GM10248 (cell line): ENCODE measurements at regions of chr17 and their contacts with region 1.

Region 1: DNA sequence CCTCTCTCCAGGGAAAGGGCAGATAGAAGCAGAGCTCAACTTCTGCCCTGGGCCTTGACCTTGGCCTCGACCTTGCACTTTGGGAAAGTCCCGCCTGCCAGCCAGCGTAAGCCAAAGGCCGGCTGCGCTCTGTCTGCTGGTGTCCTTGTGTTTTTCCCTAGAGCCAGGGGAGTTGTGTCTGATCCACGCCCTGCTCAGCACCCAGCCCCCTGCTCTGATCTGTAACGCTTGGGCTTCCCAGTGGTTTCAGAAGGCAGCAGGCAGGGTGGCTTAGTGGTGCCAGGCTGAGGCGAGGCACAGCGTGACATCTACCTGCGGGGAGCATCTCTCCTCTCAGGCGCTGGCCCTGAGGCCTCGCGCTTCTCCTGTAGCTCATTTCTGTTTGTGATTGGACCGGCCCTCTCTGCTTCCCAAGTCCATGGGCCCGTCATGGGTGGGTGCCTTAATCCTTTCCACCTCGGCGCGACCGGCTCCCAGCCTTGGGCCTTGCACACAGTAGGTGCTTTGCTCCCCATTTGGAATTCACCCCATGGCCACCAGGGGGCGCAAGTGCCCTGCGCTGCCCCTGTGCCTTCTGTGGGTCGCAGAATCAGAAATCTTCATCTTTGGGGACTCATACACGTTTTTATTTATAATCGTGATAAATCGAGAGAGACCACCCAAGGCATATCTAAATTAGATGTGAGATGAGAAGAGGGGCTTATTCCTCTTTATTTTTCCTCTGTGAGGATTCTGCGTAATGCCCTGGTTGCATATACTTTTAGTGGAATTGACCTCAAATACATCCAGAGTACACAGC is 24.2 kb downstream of the SGSH start:
- DNase-seq: peak; percentile 64
- CTCF ChIP-seq: peak; percentile 85

Region 2: DNA sequence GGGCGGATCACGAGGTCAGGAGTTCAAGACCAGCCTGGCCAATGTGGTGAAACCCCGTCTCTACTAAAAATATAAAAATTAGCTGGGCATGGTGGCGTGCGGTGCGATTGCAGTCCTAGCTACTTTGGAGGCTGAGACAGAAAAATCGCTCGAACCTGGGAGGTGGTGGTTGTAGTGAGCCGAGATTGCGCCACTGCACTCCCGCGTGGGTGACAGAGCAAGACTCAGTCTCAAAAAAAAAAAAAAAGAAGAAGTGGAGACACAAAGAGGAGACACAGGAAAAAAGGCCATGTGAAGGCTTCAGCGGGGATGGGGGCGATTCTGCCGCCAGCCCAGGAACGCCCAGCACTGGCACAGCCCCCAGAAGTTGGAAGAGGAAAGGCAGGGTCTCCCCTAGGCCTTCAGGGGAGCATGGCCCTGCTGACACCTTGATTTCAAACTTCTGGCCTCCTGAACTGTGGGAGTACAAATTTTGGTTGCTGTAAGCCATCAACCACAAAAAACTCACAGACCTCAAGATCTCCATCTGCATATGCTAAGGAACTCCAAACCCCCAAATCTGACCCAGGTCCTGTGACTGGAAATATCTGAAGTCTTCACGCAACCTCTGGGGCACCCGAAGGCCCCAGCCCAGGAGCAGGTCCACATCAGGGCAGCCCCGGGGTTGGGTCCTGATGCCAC is 17.2 kb after region 1 on chr17:
- CTCF ChIA-PET with region 1: interaction called, 18 read pairs
- POLR2A ChIA-PET with region 1: no interaction called
- DNase-seq: no peak
- CTCF ChIP-seq: no peak

Region 3: DNA sequence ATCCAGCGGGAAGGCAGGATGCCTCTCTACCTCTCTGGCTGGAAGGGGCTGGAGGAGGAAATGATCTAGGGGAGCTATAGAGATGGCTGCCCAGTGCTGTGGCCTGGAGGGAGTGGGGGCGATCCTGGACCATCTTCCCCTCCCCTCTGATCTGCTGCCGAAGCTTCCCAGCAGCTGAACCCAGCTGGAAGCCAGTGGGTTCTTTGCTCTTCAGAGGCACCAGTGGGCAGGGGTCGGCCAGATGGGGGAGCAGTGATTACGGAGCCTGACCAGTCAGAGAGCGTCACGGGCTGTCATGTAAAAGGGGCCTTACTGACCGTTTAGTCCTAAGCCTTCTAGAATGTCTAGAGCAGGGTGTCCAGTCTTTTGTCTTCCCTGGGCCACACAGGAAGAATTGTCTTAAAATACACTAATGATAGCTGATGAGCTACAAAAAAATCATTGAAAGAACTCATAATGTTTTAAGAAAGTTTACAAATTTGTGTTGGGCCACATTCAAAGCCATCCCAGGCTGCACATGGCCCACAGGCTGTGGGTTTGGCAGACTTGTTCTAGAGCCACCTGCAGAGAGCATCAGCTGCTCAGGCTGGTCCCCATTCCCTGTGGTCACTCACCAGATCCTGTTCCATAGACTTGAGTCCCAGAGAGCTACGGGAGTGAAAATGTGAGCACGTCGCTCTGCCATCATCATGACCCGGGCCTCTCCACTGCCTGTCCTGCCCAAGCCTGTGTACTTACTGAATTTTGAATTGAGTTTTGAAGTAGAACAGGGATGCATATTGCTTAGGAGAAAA is 31.0 kb after region 1 on chr17:
- CTCF ChIA-PET with region 1: interaction called, 12 read pairs
- POLR2A ChIA-PET with region 1: no interaction called
- DNase-seq: no peak
- CTCF ChIP-seq: no peak

Region 4: DNA sequence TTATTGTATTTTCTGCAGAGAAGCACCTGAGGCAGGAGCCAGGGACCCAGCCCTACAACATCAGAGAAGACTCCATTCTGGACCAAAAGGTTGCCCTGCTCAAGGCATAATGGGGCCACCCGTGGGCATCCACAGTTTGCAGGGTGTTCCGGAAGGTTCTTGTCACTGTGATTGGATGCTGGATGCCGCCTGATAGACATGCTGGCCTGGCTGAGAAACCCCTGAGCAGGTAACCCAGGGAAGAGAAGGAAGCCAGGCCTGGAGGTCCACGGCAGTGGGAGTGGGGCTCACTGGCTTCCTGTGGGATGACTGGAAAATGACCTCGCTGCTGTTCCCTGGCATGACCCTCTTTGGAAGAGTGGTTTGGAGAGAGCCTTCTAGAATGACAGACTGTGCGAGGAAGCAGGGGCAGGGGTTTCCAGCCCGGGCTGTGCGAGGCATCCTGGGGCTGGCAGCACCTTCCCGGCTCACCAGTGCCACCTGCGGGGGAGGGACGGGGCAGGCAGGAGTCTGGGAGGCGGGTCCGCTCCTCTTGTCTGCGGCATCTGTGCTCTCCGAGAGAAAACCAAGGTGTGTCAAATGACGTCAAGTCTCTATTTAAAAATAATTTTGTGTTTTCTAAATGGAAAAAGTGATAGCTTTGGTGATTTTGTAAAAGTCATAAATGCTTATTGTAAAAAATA is 56.8 kb after region 1 on chr17:
- CTCF ChIA-PET with region 1: interaction called, 25 read pairs
- POLR2A ChIA-PET with region 1: no interaction called
- DNase-seq: peak; percentile 82
- CTCF ChIP-seq: peak; percentile 68